Mammary epithelial cell (primary cell): ENCODE measurements at regions of chr9 and their contacts with region 1.

Region 1: DNA sequence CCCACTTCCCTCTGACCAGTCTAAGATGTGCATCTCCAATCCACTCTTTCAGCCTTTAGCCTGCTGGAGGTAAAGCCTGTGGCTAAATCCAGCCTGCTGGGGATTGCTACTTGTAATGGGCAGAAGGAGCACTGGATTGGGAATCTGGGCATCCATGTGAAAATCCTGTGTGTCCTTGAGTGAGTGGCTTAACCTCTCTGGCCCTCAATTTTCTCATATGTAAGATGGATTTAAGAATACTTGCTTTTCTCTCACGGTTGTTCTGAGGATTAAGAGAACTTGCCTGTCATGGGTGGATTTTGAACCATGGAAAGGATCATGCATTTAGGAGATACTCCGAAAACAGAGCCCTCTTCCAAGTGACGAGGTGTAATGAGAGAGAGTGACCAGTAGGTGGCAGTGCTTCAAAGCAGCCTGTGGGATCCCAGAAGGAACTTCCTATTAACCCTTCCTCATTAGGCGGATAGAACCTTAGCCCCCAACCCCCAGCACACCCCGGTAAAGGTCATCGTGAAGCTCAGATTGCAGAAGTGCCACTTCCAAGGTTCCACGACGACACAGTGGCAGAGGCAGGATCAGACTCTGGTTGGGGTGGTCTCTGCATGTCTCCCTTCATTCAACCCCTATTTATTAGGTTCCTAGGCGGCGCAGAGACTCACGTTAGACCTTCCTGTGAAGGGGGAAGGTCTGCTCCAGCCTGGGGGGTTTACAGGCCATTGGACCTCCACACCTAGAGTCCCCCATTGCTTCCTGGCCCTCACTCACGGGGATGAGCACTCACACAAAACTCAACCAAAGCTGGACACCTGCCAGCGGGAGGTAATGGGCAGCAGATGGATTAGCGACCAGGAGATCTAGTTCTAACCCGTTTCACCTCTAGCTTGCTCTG is 68.7 kb upstream of the ZNF618 start:
- DNase-seq: peak; percentile 43
- H3K4me3 ChIP-seq: no peak overlapping the region
- H3K27ac ChIP-seq: no peak overlapping the region
- H3K4me1 ChIP-seq: peaks cover 4% of the 10 kb centered on the region
- H3K27me3 ChIP-seq: peaks cover 1% of the 10 kb centered on the region
- CTCF ChIP-seq: peak; percentile 90 to 91

Region 2: DNA sequence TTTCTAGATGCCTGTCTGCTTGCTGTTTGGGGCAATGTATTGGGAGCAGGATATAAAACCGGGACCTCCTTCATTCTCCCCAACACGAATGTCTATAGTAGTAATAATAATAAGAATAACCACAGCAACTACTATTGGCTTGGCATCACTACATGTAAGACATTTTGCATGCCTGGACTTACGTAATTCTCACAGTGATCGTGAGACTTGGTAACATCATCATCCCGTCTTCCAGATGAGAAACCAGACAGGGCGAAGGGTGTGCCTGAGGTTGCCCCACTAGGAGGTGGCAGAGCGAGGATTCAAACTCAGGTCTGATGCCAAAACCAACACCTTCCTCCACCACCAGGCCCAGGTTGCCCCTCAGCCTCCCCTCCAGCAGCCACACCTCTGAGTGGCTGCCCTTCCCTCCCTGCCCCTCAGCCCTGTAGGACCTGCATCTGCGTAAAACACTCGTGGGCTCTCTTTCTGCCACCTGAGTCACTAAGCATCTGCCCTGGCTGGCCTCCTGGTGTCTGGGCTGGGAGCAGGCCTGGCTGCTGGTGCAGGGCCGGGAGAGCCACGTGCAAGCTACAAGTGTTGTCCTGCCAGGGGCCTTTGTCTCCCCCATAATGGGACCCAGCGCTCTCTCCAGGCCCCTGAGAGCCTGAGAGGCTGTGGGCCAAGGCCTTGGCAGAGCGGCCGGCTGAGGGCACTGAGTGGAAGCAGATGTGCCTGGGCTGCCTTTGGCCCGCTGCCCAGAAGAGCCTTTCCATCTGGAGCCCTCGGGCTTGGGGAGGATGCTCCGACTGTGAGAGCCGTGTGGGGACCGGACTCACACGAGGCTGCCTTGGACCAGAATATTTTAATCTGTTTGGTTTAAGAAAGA is 158.6 kb before region 1 on chr9:
- CTCF ChIA-PET with region 1: no interaction called
- dilution Hi-C with region 1: no loop called
- in situ Hi-C with region 1: no loop called
- intact Hi-C with region 1: no loop called
- DNase-seq: no peak
- H3K4me3 ChIP-seq: no peak overlapping the region
- H3K27ac ChIP-seq: no peak overlapping the region
- H3K4me1 ChIP-seq: peaks cover 6% of the 10 kb centered on the region
- H3K27me3 ChIP-seq: no peaks in the 10 kb centered on the region
- CTCF ChIP-seq: no peak

Region 3: GRCh38 chr9:113715086-113715485 is 92.3 kb before region 1 on chr9:
- CTCF ChIA-PET with region 1: no interaction called
- dilution Hi-C with region 1: loop called (anchors 5 kb)
- in situ Hi-C with region 1: no loop called
- intact Hi-C with region 1: no loop called
- DNase-seq: peak; percentile 72
- H3K4me3 ChIP-seq: no peak overlapping the region
- H3K27ac ChIP-seq: no peak overlapping the region
- H3K4me1 ChIP-seq: peaks cover 7% of the 10 kb centered on the region
- H3K27me3 ChIP-seq: peaks cover 2% of the 10 kb centered on the region
- CTCF ChIP-seq: no peak

Region 4: DNA sequence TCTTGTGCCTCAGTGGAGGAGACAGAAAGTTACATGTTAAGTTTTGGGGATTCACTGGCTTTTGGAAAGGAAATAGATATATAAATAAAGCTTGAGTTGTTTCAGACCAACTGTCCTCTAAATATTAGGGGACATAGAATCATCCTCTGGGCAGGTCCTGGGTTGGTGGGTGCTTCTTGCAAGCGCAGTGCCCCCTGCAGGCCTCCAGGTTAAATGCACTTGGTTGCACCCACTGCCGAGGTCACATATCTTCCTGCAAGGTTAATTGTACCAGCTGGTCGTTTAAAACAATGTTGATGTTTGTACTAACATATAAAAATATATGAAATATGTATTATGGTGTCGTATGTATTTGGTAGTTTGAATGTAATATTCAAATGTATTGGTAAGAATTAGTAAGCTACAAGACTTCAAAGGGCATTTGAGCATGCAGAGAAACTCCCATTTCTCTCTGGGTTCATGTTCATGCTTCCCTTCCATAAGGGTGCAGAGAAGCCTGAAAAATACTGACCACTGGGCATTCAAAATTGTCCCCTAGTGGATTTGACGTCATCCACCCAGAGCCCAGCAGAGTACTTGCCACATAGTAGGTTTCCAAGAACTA is 155.7 kb after region 1 on chr9:
- CTCF ChIA-PET with region 1: no interaction called
- dilution Hi-C with region 1: no loop called
- in situ Hi-C with region 1: no loop called
- intact Hi-C with region 1: loop called (anchors 1 kb)
- DNase-seq: peak; percentile 21
- H3K4me3 ChIP-seq: no peak overlapping the region
- H3K27ac ChIP-seq: no peak overlapping the region
- H3K4me1 ChIP-seq: peaks cover 4% of the 10 kb centered on the region
- H3K27me3 ChIP-seq: no peaks in the 10 kb centered on the region
- CTCF ChIP-seq: peak; percentile 82 to 84

Region 5: DNA sequence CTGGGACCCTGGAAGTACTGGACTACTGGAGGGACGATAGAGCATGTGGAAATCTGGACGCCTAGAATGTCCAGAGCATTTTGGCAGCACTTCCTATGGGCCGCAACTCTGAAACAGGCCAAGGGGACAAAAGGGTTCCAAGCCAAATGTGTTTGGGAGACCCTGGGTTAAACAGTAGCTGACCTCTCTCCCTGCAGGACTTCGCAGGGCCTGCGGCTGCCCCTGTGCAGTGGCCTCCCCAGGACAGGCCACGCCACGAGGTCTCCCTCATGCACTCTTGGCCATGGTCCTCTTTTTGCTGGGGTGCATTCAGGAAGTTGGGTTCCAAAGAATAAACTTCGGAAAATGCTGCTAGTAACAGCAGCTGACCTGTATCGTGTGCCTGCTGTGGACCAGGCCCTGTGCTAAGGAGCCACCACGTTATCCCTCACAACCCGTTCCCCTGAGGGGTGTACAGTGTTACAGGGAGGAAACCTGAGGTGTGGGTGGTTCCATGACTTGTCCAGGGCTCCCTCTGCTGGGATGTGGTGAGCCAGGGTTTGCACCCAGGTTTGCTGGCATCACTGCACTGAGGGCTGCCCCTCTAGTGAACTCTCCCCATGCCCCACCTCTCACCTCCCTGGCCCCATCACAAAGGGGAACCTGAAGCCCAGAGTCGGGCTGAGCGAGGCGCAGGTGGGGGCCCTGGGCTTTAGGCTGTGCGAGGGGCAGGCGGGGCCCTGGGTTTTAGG is 191.3 kb after region 1 on chr9:
- CTCF ChIA-PET with region 1: no interaction called
- dilution Hi-C with region 1: no loop called
- in situ Hi-C with region 1: no loop called
- intact Hi-C with region 1: no loop called
- DNase-seq: no peak
- H3K4me3 ChIP-seq: no peak overlapping the region
- H3K27ac ChIP-seq: no peak overlapping the region
- H3K4me1 ChIP-seq: no peaks in the 10 kb centered on the region
- H3K27me3 ChIP-seq: no peaks in the 10 kb centered on the region
- CTCF ChIP-seq: peak in 1 of 2 donors; percentile 27

Region 6: DNA sequence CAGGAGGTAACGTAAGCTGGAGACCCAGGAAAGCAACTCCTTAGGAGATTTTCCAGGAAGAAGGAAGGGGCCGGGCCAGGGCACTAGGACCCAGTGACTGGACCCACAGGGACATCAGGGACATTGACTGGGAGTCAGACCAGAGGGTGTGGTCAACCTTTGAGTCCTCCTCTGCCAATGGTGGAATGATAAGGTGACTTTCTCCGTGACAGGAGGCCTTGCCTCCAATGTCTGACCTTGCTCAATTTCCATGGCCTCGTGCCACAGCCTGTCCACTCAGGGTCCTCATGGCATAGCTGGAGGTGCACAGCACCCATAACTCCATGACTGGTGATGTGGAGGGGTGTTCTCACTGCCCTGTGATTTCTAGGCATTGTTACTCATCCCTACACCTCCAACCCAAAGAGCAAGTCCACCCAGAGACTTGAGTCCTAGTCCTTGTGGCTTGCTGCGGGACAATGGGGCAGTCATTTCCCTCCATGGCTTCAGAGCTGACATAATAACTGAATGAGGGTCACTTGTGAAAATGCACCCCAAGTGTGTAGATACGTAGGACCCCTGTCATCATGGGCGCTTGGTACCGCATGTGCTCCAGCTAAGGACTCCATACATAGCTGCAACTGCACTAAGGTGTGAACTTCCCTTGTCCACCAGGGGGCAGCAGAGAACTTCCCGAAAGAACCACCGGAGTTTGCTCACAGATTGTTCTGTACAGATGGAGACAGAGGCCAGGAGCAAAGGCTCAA is 274.8 kb after region 1 on chr9:
- CTCF ChIA-PET with region 1: interaction called, 8 read pairs
- dilution Hi-C with region 1: no loop called
- in situ Hi-C with region 1: no loop called
- intact Hi-C with region 1: loop called (anchors 5 kb)
- DNase-seq: peak; percentile 72
- H3K4me3 ChIP-seq: no peak overlapping the region
- H3K27ac ChIP-seq: no peak overlapping the region
- H3K4me1 ChIP-seq: no peaks in the 10 kb centered on the region
- H3K27me3 ChIP-seq: no peaks in the 10 kb centered on the region
- CTCF ChIP-seq: peak; percentile 91 to 92